ENCODE measurements at regions of chr11 and their contacts with region 1.

Region 1: DNA sequence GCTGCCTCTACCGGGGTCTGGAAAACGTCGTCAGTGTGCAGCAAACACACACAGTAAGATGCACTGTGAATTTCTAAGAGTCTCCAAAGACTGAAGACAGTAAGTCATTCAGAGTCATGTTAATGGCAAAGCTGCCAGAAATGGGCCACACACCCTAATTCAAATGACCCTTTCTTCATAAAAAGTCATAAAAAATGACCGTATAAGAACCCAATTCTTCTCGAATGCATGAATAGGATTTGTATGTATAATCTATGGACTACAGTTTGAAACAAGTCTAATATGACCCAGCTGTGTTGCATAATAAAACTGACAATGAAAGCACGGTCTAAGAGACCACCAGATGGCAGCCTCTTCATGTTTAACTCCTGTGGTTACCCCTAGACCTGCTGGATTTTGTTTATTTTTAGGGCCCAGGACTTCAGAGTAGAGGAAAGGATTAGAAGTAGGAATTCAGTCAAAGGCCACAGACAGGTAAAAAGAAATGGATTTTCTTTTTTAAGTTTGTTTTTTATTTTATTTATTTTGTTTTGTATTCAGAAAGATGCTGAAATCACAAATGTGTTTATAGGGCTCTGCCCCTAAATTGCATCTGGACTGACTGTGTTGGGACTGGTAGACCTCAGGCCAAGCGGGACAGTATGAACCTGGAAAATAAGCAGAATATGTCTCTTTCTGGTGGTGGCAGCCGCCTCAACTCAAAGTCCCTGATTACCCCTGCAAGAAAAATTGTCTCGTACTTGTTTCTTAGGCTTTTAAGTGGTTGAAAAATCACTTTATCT is 32.1 kb upstream of the SLC5A12 start:
- DNase-seq: peak; percentile 31
- H3K4me3 ChIP-seq: no peak overlapping the region
- CTCF ChIP-seq: peak; percentile 66

Region 2: DNA sequence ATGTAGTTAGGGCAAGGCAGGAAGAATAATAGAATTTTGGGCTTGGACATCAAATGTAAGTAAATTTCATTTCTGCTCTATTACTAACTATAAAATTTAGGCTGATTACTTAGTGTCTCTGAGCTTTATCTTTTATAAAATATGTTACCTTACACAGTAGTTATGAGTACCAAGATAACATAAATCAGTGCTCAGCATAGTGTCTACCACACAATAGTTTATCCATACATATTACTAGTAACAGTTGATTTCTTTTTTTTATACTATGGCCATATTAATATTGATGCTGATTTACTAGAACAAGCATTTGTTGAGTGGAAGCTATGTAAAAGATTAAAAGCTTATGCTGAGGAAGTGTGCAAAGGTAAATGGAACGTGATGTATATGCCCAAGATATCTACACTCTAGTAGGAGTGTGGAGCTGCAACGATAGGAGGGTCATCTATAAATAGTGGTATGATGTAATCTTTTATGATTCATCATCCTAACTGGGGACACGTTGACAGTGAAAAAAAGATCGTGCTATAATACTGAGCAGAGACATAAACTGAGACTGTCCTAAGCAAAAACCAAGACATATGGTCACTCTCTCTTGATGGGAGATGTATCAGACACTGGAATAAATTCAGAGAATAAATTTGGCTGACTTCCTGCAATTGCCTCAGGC is 23.4 kb before region 1 on chr11:
- CTCF ChIA-PET with region 1: no interaction called
- POLR2A ChIA-PET with region 1: no interaction called
- DNase-seq: no peak
- H3K4me3 ChIP-seq: no peak overlapping the region
- CTCF ChIP-seq: no peak

Region 3: DNA sequence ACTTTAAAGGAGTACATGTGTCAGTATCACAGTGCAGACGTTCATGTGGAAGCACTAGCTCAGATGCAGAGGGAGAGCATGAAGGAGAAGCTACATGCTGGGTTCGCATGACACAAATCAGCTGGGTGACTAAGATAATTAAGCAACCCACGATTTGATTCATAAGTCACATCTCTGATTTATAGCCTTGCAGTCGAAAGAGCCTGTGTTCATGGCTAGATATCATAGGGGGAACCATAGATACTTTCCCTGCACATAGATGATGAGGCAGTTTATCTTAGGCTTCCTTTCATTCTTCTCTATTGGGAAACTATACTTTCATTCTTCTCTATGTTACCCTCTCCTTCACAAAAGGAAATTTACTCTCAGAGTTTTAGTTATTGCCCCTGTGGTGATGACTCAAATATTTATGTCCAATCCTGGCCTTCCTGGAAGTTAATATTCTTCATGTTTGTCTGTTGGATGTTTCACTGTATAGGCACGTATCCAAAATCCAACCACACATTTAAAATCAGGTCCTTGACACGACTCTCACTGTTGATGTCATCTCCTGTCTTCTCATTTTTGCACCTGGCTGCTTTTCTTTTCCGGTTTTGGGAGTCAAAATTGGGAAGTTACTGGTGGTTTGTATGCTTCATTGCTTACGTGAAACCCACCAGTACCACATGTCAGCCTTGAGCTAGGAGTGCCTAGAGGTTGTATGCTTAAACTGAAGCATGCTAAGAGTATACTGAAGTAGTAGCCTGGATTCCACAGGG is 24.3 kb after region 1 on chr11:
- CTCF ChIA-PET with region 1: interaction called, 13 read pairs
- POLR2A ChIA-PET with region 1: no interaction called
- DNase-seq: peak; percentile 82
- H3K4me3 ChIP-seq: peak overlapping the region; percentile 19
- CTCF ChIP-seq: no peak

Region 4: DNA sequence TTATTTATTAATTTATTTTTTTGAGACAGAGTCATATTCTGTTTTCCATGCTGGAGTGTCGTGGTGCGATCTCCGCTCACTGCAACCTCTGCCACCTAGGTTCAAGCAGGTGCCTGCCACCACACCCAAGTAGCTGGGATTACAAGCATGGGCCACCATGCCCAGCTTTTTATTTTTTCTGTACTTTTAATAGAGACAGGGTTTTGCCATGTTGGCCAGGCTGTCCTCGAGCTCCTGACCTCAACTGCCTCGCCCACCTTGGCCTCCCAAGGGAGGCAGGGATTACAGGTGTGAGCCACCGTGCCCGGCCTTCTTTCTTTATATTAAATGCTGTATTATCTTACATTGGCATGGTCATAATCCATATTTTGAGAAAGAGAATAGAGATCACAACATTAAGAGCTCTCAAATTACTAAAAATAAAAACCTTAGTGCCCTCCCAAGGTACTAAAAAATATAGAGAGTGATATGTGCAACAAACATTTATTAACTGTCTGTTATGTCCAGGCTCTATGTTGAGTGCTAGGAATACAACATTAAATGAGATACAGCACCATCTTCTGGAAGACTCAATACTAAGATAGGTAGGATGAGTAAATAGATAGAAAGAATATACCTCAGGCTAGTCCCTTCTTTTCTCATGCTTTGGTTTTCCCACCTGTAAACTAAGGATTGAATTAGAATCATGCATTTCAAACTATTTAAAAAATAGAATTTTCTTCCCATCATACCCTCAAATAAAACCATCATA is 370.8 kb after region 1 on chr11:
- CTCF ChIA-PET with region 1: interaction called, 39 read pairs
- POLR2A ChIA-PET with region 1: no interaction called
- DNase-seq: no peak
- H3K4me3 ChIP-seq: no peak overlapping the region
- CTCF ChIP-seq: no peak